ENCODE measurements at regions of chr9 and their contacts with region 1.

Region 1: DNA sequence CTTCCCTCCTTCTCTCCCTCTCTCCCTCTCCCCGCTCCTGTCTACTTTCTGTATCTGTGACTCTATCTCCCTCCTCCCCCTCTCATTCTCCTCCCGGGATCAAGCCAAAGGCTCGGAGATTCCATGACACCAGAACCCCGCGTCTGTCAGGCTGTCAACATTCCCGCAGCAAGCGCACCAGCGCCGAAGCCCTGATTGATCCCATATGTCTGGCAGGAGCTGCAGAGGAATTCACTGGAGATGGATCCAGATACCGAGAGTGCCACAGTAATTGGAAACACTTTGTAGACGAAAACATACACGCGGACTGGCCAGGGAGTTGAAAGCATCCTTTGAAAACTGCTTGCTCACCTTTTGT is 300 bp upstream of the SVEP1 start:
- DNase-seq: no peak
- H3K4me3 ChIP-seq: peak overlapping the region in 3 of 4 donors; percentile 24 to 54 (median 45)
- H3K27ac ChIP-seq: peak overlapping the region; percentile 63 to 80 (median 74)
- H3K4me1 ChIP-seq: peaks cover 0 to 14% (median 7%) of the 10 kb centered on the region in 4 donors
- H3K27me3 ChIP-seq: peaks cover 62% of the 10 kb centered on the region
- CTCF ChIP-seq: no peak
- EP300 ChIP-seq: no peak
- POLR2A ChIP-seq: no peak

Region 2: GRCh38 chr9:109264877-109265587 is 1314.8 kb before region 1 on chr9:
- in situ Hi-C with region 1: no loop called
- intact Hi-C with region 1: loop called (anchors 10 kb)
- DNase-seq: peak; percentile 73
- H3K4me3 ChIP-seq: no peak overlapping the region
- H3K27ac ChIP-seq: no peak overlapping the region
- H3K4me1 ChIP-seq: peaks cover 0 to 11% (median 5%) of the 10 kb centered on the region in 4 donors
- H3K27me3 ChIP-seq: no peaks in the 10 kb centered on the region
- CTCF ChIP-seq: no peak
- EP300 ChIP-seq: no peak
- POLR2A ChIP-seq: no peak

Measured in transverse colon (tissue), 4 donors.